ENCODE measurements at regions of chr7 and their contacts with region 1.

Region 1: DNA sequence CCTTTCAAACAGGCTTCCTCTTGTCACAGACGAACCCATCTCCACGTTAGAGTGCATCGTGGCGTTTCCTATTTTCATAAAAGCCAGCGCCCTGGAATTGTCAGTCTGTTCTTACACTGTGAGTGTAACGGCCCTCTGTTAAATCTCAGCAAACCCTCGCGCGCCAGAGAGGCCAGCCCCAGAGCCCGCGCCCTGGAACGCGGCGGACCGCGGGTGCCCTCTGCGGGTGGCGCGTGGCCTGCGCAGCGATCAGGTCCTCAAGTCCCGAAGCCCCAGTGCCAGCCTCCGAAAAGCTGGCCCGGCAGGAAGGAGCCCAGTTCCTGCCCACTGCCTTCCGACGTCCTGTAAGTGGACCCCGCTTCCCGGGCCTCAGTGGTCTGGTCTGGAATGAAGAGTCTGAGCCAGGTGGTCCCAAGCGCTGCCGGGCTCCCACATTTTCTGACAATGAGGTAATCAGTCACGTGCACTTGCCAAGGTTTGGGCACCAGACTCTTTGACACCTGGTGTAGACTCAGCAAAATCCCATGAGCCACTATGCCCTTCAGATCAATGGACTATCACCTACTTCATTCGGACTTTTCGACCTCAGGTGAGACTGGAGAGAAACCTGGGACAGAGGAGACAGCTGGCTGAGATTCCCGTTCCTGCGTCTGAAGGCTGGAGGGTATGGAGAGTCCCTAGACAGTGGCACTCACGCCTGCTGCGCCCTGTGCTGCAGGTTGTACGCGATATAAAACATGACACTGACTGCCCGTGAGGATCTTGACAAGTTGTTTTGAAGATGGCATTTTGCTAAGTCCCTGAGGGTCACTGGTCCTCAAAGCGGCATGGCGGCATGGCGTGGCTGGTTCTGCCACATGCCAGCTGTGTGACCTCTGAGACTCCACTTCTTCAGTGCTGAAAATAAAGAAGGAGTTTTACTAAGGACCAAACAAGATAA is 109.4 kb upstream of the LANCL2 start:
- DNase-seq: peak; percentile 78 to 90
- H3K4me3 ChIP-seq: peak overlapping the region; percentile 75
- H3K4me3 Mint-ChIP-seq: peak overlapping the region; percentile 86
- H3K27ac Mint-ChIP-seq: peak overlapping the region; percentile 42
- H3K4me1 ChIP-seq: peaks cover 9% of the 10 kb centered on the region; the same call in 1 of the 2 replicates
- H3K4me1 Mint-ChIP-seq: no peaks in the 10 kb centered on the region
- H3K27me3 ChIP-seq: no peaks in the 10 kb centered on the region
- H3K27me3 Mint-ChIP-seq: peaks cover 8% of the 10 kb centered on the region
- CTCF ChIP-seq: peak; percentile 85 to 91

Region 2: DNA sequence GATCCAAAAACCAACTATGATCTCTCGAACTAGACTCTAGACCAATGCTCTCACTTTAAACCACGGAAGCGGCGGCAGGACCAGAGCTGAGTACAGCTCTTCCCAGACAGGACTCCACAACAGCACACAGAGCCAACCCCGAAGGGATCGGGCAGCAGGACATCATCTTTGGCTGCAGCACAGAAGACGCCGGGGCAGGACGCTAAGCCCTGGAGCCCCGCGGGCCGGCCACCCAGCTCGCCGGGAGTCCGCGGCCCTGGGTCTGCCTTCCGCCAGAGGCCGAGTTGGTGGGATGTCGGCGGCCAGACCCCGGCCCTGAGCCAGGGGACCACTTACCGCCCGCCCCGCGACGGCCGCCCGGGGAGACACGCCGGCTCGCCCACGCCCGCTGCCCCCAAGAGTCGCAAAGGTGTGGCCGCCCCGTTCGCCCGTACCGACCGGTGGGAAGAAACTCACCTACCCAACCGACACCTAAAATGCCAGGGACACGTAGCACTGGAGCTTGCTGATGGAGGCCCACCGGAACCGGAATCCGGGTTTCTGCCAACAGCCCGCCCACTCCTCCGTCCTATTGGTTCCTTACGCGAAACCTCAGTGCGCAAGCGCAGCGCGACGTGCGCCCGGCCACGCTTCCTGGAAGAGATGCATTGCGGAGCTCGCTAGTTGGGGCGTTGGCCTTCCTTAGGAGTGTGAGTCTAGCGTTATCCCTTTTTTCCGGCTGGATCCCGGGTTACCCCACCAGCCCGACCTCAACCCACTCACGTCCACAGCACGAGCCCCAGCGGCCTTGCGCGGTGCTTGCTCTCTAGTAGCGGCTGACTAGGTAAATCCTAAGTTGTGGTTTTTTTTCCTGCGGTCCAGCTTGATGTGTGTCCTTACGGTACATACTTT is 496.8 kb before region 1 on chr7 and contains the start of gene SEC61G:
- CTCF ChIA-PET with region 1: interaction called, 16 read pairs
- POLR2A ChIA-PET with region 1: interaction called, 3 read pairs
- intact Hi-C with region 1: no loop called
- DNase-seq: peak; percentile 96 to 97
- H3K4me3 ChIP-seq: peak within 1 kb of the TSS; percentile 83
- H3K4me3 Mint-ChIP-seq: peak within 1 kb of the TSS; percentile 97
- H3K27ac Mint-ChIP-seq: peak within 1 kb of the TSS; percentile 94
- H3K4me1 ChIP-seq: peaks cover 8% of the 10 kb centered on the region
- H3K4me1 Mint-ChIP-seq: peaks cover 7% of the 10 kb centered on the region
- H3K27me3 ChIP-seq: no peaks in the 10 kb centered on the region
- H3K27me3 Mint-ChIP-seq: peaks cover 2% of the 10 kb centered on the region
- CTCF ChIP-seq: no peak
- total RNA-seq, gene SEC61G: 189 and 195 TPM in 2 replicates

Region 3: GRCh38 chr7:54788664-54789063 is 467.1 kb before region 1 on chr7:
- CTCF ChIA-PET with region 1: interaction called, 60 read pairs
- POLR2A ChIA-PET with region 1: interaction called, 4 read pairs
- intact Hi-C with region 1: loop called (anchors 1 kb)
- DNase-seq: peak; percentile 67 to 81
- H3K4me3 ChIP-seq: no peak overlapping the region
- H3K4me3 Mint-ChIP-seq: peak overlapping the region; percentile 44
- H3K27ac Mint-ChIP-seq: no peak overlapping the region
- H3K4me1 ChIP-seq: 0 out of 2 replicates have a peak, but pooled peaks cover 4% of the 10 kb centered on the region
- H3K4me1 Mint-ChIP-seq: peaks cover 9% of the 10 kb centered on the region
- H3K27me3 ChIP-seq: no peaks in the 10 kb centered on the region
- H3K27me3 Mint-ChIP-seq: no peaks in the 10 kb centered on the region
- CTCF ChIP-seq: peak; percentile 50 to 69

Region 4: DNA sequence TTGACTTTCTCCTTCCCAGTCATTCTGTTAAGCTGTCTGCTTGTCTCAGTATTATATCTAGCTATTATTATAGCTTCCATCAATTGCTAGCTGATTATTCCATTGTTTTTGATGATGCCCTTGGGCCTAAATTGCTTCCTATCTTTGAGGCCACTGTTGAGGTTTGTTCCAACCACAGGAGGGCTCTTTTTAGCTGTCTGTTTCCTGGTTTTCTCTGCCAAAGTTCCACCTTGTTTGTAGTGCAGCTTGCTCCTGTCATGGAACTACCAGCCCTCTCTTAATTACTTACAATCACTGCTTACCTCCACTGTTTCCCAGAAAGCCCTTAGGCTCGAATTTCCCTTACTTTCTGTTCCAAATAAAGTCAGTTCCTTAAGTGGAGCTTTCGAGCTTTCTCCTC is 378.1 kb before region 1 on chr7:
- CTCF ChIA-PET with region 1: interaction called, 18 read pairs
- POLR2A ChIA-PET with region 1: no interaction called
- intact Hi-C with region 1: loop called (anchors 1 kb)
- DNase-seq: peak in 1 of 2 experiments; percentile 36
- H3K4me3 ChIP-seq: no peak overlapping the region
- H3K4me3 Mint-ChIP-seq: no peak overlapping the region
- H3K27ac Mint-ChIP-seq: peak overlapping the region; percentile 8
- H3K4me1 ChIP-seq: peaks cover 44% of the 10 kb centered on the region
- H3K4me1 Mint-ChIP-seq: peaks cover 30% of the 10 kb centered on the region
- H3K27me3 ChIP-seq: no peaks in the 10 kb centered on the region
- H3K27me3 Mint-ChIP-seq: no peaks in the 10 kb centered on the region
- CTCF ChIP-seq: peak in 1 of 2 experiments; percentile 37

Region 5: GRCh38 chr7:55073945-55074499 is 181.7 kb before region 1 on chr7:
- CTCF ChIA-PET with region 1: interaction called, 4 read pairs
- POLR2A ChIA-PET with region 1: no interaction called
- intact Hi-C with region 1: loop called (anchors 5 kb)
- DNase-seq: peak; percentile 86 to 94
- H3K4me3 ChIP-seq: peak overlapping the region; percentile 15; the same call in 1 of the 2 replicates
- H3K4me3 Mint-ChIP-seq: peak overlapping the region; percentile 71
- H3K27ac Mint-ChIP-seq: peak overlapping the region; percentile 97
- H3K4me1 ChIP-seq: peaks cover 73% of the 10 kb centered on the region
- H3K4me1 Mint-ChIP-seq: peaks cover 55% of the 10 kb centered on the region
- H3K27me3 ChIP-seq: no peaks in the 10 kb centered on the region
- H3K27me3 Mint-ChIP-seq: no peaks in the 10 kb centered on the region
- CTCF ChIP-seq: no peak

Region 6: GRCh38 chr7:55179931-55180661 is 75.7 kb before region 1 on chr7:
- CTCF ChIA-PET with region 1: interaction called, 34 read pairs
- POLR2A ChIA-PET with region 1: no interaction called
- intact Hi-C with region 1: loop called (anchors 1 kb)
- DNase-seq: peak in 1 of 2 experiments; percentile 9
- H3K4me3 ChIP-seq: no peak overlapping the region
- H3K4me3 Mint-ChIP-seq: peak overlapping the region; percentile 68
- H3K27ac Mint-ChIP-seq: peak overlapping the region; percentile 92
- H3K4me1 ChIP-seq: peaks cover 70% of the 10 kb centered on the region
- H3K4me1 Mint-ChIP-seq: peaks cover 44% of the 10 kb centered on the region
- H3K27me3 ChIP-seq: no peaks in the 10 kb centered on the region
- H3K27me3 Mint-ChIP-seq: no peaks in the 10 kb centered on the region
- CTCF ChIP-seq: no peak

Region 7: GRCh38 chr7:55207436-55208125 is 48.2 kb before region 1 on chr7:
- CTCF ChIA-PET with region 1: interaction called, 16 read pairs
- POLR2A ChIA-PET with region 1: no interaction called
- intact Hi-C with region 1: loop called (anchors 2 kb)
- DNase-seq: no peak
- H3K4me3 ChIP-seq: no peak overlapping the region
- H3K4me3 Mint-ChIP-seq: no peak overlapping the region
- H3K27ac Mint-ChIP-seq: no peak overlapping the region
- H3K4me1 ChIP-seq: peaks cover 11% of the 10 kb centered on the region; the same call in 1 of the 2 replicates
- H3K4me1 Mint-ChIP-seq: peaks cover 10% of the 10 kb centered on the region
- H3K27me3 ChIP-seq: no peaks in the 10 kb centered on the region
- H3K27me3 Mint-ChIP-seq: no peaks in the 10 kb centered on the region
- CTCF ChIP-seq: no peak

Region 8: DNA sequence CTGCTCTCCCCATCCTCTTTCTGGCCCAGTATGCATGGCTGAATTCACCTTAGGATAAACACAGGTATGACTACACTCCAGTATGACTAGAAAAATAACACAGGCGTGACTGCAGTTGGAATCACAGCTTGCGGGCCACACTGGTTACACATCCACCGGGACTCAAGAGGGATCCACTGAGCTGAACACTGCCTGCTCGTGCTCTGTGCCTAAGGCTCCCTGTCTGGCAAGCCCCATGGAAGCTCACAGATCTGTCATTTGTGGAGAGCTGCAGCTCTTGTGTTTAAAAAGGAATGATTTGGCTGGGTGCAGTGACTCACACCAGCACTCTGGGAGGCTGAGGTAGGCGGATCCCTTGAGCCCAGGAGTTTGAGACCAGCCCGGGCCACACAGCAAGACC is 289.7 kb after region 1 on chr7:
- CTCF ChIA-PET with region 1: no interaction called
- POLR2A ChIA-PET with region 1: no interaction called
- intact Hi-C with region 1: no loop called
- DNase-seq: no peak
- H3K4me3 ChIP-seq: no peak overlapping the region
- H3K4me3 Mint-ChIP-seq: no peak overlapping the region
- H3K27ac Mint-ChIP-seq: no peak overlapping the region
- H3K4me1 ChIP-seq: no peaks in the 10 kb centered on the region
- H3K4me1 Mint-ChIP-seq: no peaks in the 10 kb centered on the region
- H3K27me3 ChIP-seq: no peaks in the 10 kb centered on the region
- H3K27me3 Mint-ChIP-seq: no peaks in the 10 kb centered on the region
- CTCF ChIP-seq: no peak

Region 9: DNA sequence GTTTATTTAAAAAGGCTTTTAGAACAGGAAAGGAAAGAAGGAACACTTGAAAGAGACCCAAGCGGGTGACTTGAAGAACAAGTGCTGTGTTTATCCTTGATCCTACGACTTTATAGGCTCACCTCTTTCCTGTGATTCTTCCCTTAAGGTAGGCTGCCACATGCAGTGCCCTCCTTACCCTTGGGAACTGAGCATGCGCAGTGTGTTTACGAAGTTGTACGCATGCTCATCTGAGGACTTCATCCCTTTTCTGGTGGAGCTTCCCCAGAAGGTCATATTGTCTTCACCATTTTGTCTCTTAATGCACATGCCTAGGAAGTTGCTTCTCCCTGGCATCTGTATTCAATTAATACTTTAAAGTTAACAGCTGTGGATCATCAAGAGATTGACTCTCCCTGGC is 366.5 kb after region 1 on chr7:
- CTCF ChIA-PET with region 1: no interaction called
- POLR2A ChIA-PET with region 1: no interaction called
- intact Hi-C with region 1: no loop called
- DNase-seq: no peak
- H3K4me3 ChIP-seq: no peak overlapping the region
- H3K4me3 Mint-ChIP-seq: no peak overlapping the region
- H3K27ac Mint-ChIP-seq: no peak overlapping the region
- H3K4me1 ChIP-seq: no peaks in the 10 kb centered on the region
- H3K4me1 Mint-ChIP-seq: no peaks in the 10 kb centered on the region
- H3K27me3 ChIP-seq: no peaks in the 10 kb centered on the region
- H3K27me3 Mint-ChIP-seq: no peaks in the 10 kb centered on the region
- CTCF ChIP-seq: no peak